GM12878 (cell line): ENCODE measurements at regions of chr1 and their contacts with region 1.

Region 1: GRCh38 chr1:152869808-152870419 is 8.2 kb upstream of the SMCP start:
- DNase-seq: peak; percentile 40
- ATAC-seq: peak; percentile 97
- H3K4me3 ChIP-seq: no peak overlapping the region
- H3K27ac ChIP-seq: no peak overlapping the region
- H3K4me1 ChIP-seq: peaks cover 19% of the 10 kb centered on the region
- H3K27me3 ChIP-seq: peaks cover 0 to 2% of the 10 kb centered on the region in 2 experiments; a peak in 1 of 4 replicates
- CTCF ChIP-seq: peak; percentile 78 to 84 (median 84)
- EP300 ChIP-seq: no peak
- POLR2A ChIP-seq: no peak
- RAD21 ChIP-seq: peak; percentile 88

Region 2: GRCh38 chr1:152654110-152654509 is 215.8 kb before region 1 on chr1:
- CTCF ChIA-PET with region 1: interaction called, 9 read pairs
- POLR2A ChIA-PET with region 1: no interaction called
- RAD21 ChIA-PET with region 1: no interaction called
- SMC1A ChIA-PET with region 1: interaction called, 5 read pairs
- in situ Hi-C with region 1: no loop called
- intact Hi-C with region 1: loop called (anchors 2 kb)
- DNase-seq: no peak
- ATAC-seq: peak; percentile 93
- H3K4me3 ChIP-seq: no peak overlapping the region
- H3K27ac ChIP-seq: no peak overlapping the region
- H3K4me1 ChIP-seq: no peaks in the 10 kb centered on the region
- H3K27me3 ChIP-seq: peaks cover 0 to 9% of the 10 kb centered on the region in 2 experiments; a peak in 2 of 4 replicates
- CTCF ChIP-seq: peak; percentile 68 to 84 (median 80)
- EP300 ChIP-seq: no peak
- POLR2A ChIP-seq: no peak
- RAD21 ChIP-seq: peak; percentile 77

Region 3: GRCh38 chr1:152886758-152887409 is 17.0 kb after region 1 on chr1:
- CTCF ChIA-PET with region 1: interaction called, 13 read pairs
- POLR2A ChIA-PET with region 1: no interaction called
- RAD21 ChIA-PET with region 1: interaction called, 5 read pairs
- SMC1A ChIA-PET with region 1: no interaction called
- in situ Hi-C with region 1: no loop called
- intact Hi-C with region 1: no loop called
- DNase-seq: no peak
- ATAC-seq: no peak
- H3K4me3 ChIP-seq: no peak overlapping the region
- H3K27ac ChIP-seq: no peak overlapping the region
- H3K4me1 ChIP-seq: peaks cover 21% of the 10 kb centered on the region
- H3K27me3 ChIP-seq: no peaks in the 10 kb centered on the region
- CTCF ChIP-seq: no peak
- EP300 ChIP-seq: no peak
- POLR2A ChIP-seq: no peak
- RAD21 ChIP-seq: no peak

Region 4: DNA sequence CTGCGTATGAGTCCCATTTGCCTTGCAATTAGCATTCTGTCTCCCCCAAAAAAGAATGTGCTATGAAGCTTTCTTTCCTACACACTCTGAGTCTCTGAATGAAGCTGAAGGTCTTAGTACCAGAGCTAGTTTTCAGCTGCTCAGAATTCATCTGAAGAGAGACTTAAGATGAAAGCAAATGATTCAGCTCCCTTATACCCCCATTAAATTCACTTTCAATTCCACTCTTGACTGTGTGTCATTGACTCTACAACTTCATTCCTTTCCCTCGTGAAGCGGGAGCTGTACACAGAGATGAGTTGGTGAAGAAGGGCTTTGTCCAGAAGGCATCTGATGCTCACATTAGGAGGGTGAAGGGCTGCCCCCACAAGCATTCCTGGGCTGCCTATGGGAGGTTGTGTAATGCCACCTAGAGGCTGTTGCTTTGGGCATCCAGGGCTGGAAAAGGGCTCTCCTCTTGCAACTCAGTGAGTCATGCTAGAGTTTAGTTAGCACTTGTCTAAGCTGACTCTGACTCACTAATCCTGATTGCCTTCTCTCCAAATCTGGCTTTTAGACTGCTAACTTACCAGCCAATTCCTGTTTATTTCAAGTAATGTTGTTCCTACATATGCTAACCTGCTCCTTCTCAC is 162.9 kb after region 1 on chr1:
- CTCF ChIA-PET with region 1: interaction called, 5 read pairs
- POLR2A ChIA-PET with region 1: no interaction called
- RAD21 ChIA-PET with region 1: no interaction called
- SMC1A ChIA-PET with region 1: no interaction called
- in situ Hi-C with region 1: no loop called
- intact Hi-C with region 1: loop called (anchors 10 kb)
- DNase-seq: no peak
- ATAC-seq: peak; percentile 67
- H3K4me3 ChIP-seq: no peak overlapping the region
- H3K27ac ChIP-seq: no peak overlapping the region
- H3K4me1 ChIP-seq: no peaks in the 10 kb centered on the region
- H3K27me3 ChIP-seq: no peaks in the 10 kb centered on the region; a peak in 1 of 4 replicates
- CTCF ChIP-seq: peak in 2 of 3 experiments; percentile 14 to 30; a peak in 3 of 6 replicates
- EP300 ChIP-seq: no peak
- POLR2A ChIP-seq: no peak
- RAD21 ChIP-seq: peak; percentile 23; the same call in 1 of the 2 replicates

Region 5: DNA sequence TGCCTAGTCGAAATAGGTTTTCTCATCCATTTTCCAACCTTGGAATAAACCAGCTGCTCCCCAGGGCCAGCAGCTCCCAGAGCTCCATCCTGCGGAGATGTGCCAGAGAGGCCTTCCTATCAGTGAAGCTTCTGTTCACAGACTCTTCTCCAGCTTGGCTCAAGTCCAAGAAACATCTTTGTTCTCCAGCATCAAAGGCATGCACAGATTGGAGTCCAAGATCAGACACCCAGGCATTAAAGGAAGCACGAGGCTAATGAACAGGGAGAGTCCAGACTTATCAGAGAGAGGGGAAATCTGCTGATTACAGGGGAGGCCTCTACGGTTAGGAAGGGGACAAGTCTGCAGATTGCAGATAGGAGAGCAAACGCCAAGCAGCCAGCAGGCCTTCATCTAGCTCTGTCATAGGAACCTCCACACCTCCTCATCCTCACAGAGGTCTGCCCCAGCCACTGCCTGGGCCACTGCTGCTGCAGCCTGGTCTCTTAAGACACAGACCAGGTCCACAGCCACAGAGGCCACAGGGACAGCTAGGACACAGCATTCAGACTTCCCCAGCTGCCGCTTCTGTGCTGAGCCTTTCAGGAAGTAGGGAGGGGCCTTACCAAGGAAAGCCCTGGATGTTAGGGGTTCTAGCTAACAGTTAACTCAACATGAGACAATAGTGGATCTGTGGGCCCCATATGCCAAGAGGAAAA is 350.8 kb after region 1 on chr1:
- CTCF ChIA-PET with region 1: interaction called, 49 read pairs
- POLR2A ChIA-PET with region 1: no interaction called
- RAD21 ChIA-PET with region 1: no interaction called
- SMC1A ChIA-PET with region 1: interaction called, 9 read pairs
- in situ Hi-C with region 1: loop called (anchors 5 kb)
- intact Hi-C with region 1: loop called (anchors 2 kb)
- DNase-seq: no peak
- ATAC-seq: no peak
- H3K4me3 ChIP-seq: no peak overlapping the region
- H3K27ac ChIP-seq: no peak overlapping the region
- H3K4me1 ChIP-seq: no peaks in the 10 kb centered on the region
- H3K27me3 ChIP-seq: peaks cover 0 to 2% of the 10 kb centered on the region in 2 experiments; a peak in 1 of 4 replicates
- CTCF ChIP-seq: no peak
- EP300 ChIP-seq: no peak
- POLR2A ChIP-seq: no peak
- RAD21 ChIP-seq: no peak

Region 6: GRCh38 chr1:153277817-153278216 is 407.9 kb after region 1 on chr1:
- CTCF ChIA-PET with region 1: interaction called, 5 read pairs
- POLR2A ChIA-PET with region 1: no interaction called
- RAD21 ChIA-PET with region 1: no interaction called
- SMC1A ChIA-PET with region 1: interaction called, 6 read pairs
- in situ Hi-C with region 1: no loop called
- intact Hi-C with region 1: loop called (anchors 5 kb)
- DNase-seq: no peak
- ATAC-seq: peak; percentile 99
- H3K4me3 ChIP-seq: no peak overlapping the region
- H3K27ac ChIP-seq: no peak overlapping the region
- H3K4me1 ChIP-seq: peaks cover under 1% of the 10 kb centered on the region; the same call in 1 of the 2 replicates
- H3K27me3 ChIP-seq: no peaks in the 10 kb centered on the region
- CTCF ChIP-seq: peak; percentile 87 to 91 (median 90)
- EP300 ChIP-seq: no peak
- POLR2A ChIP-seq: no peak
- RAD21 ChIP-seq: peak; percentile 70